ENCODE measurements at regions of chr3 and their contacts with region 1.

Region 1: GRCh38 chr3:127455541-127456450 is 134.7 kb downstream of the TPRA1 start:
- DNase-seq: peak; percentile 69 to 81 (median 80)
- ATAC-seq: peak; percentile 99
- H3K4me3 ChIP-seq: no peak overlapping the region
- H3K27ac ChIP-seq: no peak overlapping the region
- H3K4me1 ChIP-seq: peaks cover 0 to 12% of the 10 kb centered on the region in 2 experiments; a peak in 2 of 5 replicates
- H3K27me3 ChIP-seq: peaks cover 2 to 38% of the 10 kb centered on the region in 2 experiments; a peak in 3 of 5 replicates
- CTCF ChIP-seq: peak; percentile 74 to 99 (median 91)
- EP300 ChIP-seq: no peak
- POLR2A ChIP-seq: no peak
- RAD21 ChIP-seq: peak; percentile 66 to 85

Region 2: DNA sequence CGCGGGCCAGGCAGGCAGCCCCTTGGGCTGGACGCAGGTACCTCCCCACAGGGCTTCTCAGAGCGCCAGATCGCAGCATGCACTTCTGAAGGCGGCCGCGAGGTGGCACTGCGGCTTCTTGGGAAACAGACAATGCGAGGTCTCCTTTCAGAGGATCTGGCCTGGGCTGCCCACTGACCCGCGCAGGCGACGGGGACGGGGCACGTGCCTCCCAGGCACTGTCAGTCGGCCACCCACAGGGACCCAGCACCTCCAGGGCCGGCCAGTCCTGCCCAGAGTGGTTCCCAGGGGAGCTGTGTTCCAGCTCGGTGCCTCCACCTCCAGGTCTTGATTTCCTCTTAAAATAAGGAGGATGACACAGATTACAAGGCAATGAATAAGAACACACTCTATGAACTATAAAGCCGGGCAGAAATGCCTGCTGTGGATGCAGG is 776.5 kb before region 1 on chr3:
- CTCF ChIA-PET with region 1: no interaction called
- POLR2A ChIA-PET with region 1: no interaction called
- in situ Hi-C with region 1: loop called (anchors 10 kb)
- intact Hi-C with region 1: loop called (anchors 10 kb)
- DNase-seq: peak; percentile 66 to 77 (median 70)
- ATAC-seq: peak; percentile 97
- H3K4me3 ChIP-seq: no peak overlapping the region
- H3K27ac ChIP-seq: no peak overlapping the region
- H3K4me1 ChIP-seq: peaks cover 0 to 10% of the 10 kb centered on the region in 2 experiments; a peak in 2 of 5 replicates
- H3K27me3 ChIP-seq: peaks cover 0 to 23% of the 10 kb centered on the region in 2 experiments; a peak in 2 of 5 replicates
- CTCF ChIP-seq: peak; percentile 70 to 79 (median 72)
- EP300 ChIP-seq: no peak
- POLR2A ChIP-seq: no peak
- RAD21 ChIP-seq: peak; percentile 69 to 82

Region 3: GRCh38 chr3:127374086-127375010 is 81.4 kb before region 1 on chr3:
- CTCF ChIA-PET with region 1: no interaction called
- POLR2A ChIA-PET with region 1: no interaction called
- in situ Hi-C with region 1: no loop called
- intact Hi-C with region 1: loop called (anchors 1 kb)
- DNase-seq: peak; percentile 26 to 54 (median 48)
- ATAC-seq: peak; percentile 84
- H3K4me3 ChIP-seq: no peak overlapping the region
- H3K27ac ChIP-seq: no peak overlapping the region
- H3K4me1 ChIP-seq: no peaks in the 10 kb centered on the region
- H3K27me3 ChIP-seq: no peaks in the 10 kb centered on the region
- CTCF ChIP-seq: peak; percentile 46 to 53 (median 48)
- EP300 ChIP-seq: no peak
- POLR2A ChIP-seq: no peak
- RAD21 ChIP-seq: peak; percentile 10 to 48; a peak in 2 of 4 replicates

Measured in K562 (cell line).